ENCODE measurements at regions of chr12 and their contacts with region 1.

Region 1: DNA sequence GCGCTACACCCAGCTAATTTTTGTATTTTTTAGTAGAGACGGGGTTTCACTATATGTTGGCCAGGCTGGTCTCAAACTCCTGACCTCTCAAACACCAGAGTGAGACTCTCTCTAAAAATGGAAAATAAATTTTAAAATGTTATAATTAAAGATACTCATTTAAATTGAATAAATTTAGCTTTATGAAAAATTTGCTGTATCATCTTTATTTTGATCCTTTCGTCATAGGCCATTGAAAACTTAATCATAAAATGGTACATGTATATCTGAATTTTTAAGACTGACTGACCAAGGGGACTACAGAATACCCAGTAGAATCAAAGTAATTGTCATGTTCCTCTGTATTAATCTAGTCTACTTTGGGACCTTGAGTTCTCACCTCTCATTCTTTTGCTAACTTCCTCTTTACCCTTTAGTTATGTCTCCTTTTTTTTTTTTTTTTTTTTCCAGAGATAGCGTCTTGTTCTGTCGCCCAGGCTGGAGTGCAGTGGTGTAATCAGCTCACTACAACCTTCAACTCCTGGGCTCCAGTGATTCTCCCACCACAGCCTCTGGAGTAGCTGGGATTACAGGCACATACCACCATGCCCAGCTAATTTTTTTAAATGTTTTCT is 9.5 kb downstream of the RAB5B start:
- DNase-seq: no peak
- H3K27ac ChIP-seq: no peak overlapping the region; the same call in 1 of the 2 replicates
- CTCF ChIP-seq: no peak

Region 2: GRCh38 chr12:55955800-55956508 is 27.4 kb before region 1 on chr12:
- CTCF ChIA-PET with region 1: no interaction called
- POLR2A ChIA-PET with region 1: no interaction called
- DNase-seq: peak; percentile 88
- H3K27ac ChIP-seq: peak overlapping the region; percentile 72
- CTCF ChIP-seq: no peak; the same call in 1 of the 2 replicates

Region 3: DNA sequence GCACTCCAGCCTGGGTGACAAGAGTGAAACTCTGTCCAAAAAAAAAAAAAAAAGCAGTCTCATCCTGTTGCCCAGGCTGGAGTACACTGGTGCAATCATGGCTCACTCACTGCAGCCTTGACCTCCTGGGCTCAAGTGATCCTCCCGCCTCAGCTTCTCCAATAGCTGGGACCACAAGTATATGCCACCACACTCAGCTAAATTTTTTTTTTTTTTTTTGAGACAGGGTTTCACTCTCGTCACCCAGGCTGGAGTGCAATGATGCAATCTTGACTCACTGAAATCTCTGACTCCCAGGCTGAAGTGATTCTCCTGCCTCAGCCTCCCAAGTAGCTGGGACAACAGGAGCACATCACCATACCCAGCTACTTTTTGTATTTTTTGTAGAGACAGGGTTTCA is 337.7 kb after region 1 on chr12:
- CTCF ChIA-PET with region 1: interaction called, 10 read pairs
- POLR2A ChIA-PET with region 1: no interaction called
- DNase-seq: no peak
- H3K27ac ChIP-seq: no peak overlapping the region
- CTCF ChIP-seq: no peak